ENCODE measurements at regions of chr11 and their contacts with region 1.

Region 1: DNA sequence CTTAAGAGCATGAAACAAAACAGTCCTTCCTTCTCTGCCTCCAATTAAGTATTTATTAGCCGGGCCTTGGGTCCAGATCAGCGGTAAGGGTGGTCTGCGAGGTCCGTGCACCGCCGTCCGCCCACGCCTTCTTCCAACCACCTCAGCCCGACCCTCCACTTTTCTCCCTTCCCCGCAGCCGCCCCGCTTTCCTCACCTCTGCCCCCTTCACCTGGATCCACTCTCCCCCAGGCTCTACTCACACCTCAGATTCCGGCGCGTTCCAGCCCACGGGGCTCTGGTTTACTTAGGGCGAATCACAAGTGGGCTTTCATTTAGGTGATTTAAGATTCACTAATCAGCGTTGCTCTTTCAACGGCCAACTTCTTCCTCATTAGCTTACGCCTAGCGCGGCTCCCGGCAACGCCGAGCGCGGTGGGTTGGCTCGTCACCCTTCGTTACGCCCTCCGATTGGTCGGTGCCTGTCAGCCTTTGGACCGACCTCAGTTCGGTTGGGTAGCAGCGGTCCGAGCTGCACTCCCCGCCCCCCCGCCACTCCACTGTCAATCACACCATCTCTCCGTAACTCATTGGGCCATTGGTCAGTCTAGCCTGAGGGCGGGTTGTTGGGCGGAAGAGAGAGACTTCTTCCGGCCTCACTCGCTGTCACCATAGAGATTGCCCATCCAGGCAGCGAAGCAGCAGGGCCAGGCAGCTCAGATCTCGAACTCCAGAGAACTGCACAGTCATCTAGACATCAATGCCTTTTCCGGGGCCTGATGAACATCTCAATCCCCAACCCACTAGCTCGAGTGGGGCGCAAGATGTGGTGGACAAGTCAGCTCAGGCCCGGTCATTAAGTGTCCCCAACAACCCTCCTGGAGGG is at the start of gene TMEM218:
- DNase-seq: peak; percentile 98
- H3K4me3 Mint-ChIP-seq: peak within 1 kb of the TSS; percentile 84
- H3K27ac Mint-ChIP-seq: peak within 1 kb of the TSS; percentile 79
- H3K4me1 Mint-ChIP-seq: peaks cover 16% of the 10 kb centered on the region
- H3K27me3 Mint-ChIP-seq: no peaks in the 10 kb centered on the region
- total RNA-seq, gene TMEM218: 11.5 to 12.6 TPM

Region 2: DNA sequence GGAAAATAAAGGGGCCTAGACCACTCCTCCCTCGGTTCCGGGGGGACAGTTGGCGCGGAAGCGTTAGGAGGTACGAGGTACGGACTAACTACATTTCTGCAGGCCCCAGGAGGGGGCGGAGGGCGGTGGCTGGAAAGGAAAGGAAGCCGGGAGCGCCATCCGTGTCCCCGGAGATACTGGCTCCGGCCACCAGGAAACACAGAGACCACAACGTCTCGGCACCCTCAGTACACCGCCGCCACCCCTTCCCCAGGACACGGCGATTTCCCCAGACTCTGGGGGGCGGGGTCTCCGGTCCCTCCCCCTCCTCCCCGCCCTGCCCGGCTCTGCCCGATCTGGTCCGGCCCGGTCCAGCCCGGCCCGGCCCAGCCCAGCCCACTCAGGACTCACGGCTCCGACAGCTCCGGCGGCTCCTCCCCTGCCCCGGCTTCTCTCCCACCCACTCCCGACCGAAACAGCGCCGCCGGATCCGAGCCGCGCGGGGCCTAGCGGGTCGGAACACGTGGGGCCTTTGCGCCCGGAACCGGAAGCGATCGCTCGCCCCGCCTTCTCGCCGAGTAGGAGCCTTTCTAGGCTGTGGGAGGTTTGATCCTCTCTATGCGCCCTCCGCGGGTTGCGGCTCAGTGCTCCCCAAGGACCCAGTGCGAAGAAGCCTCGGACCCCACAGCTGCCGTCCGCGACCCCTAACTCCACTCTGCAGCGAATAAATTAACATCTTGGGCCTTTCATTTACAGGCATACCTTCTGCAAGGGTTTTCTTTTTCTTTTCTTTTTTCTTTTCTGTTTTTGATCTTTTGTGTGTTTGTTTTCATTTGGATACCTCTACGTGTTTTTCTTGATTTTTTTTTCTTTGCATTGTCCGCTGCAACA is 1370.2 kb before region 1 on chr11 and contains the start of gene ZNF202:
- CTCF ChIA-PET with region 1: no interaction called
- intact Hi-C with region 1: loop called (anchors 5 kb)
- DNase-seq: peak; percentile 94
- H3K4me3 Mint-ChIP-seq: peak within 1 kb of the TSS; percentile 98
- H3K27ac Mint-ChIP-seq: peak within 1 kb of the TSS; percentile 92
- H3K4me1 Mint-ChIP-seq: peaks cover 40% of the 10 kb centered on the region
- H3K27me3 Mint-ChIP-seq: no peaks in the 10 kb centered on the region
- total RNA-seq, gene ZNF202: 5.9 to 6.4 TPM

Region 3: GRCh38 chr11:124875943-124876817 is 235.4 kb before region 1 on chr11:
- CTCF ChIA-PET with region 1: no interaction called
- intact Hi-C with region 1: loop called (anchors 1 kb)
- DNase-seq: peak; percentile 86
- H3K4me3 Mint-ChIP-seq: peak overlapping the region; percentile 83
- H3K27ac Mint-ChIP-seq: peak overlapping the region; percentile 73
- H3K4me1 Mint-ChIP-seq: peaks cover 19% of the 10 kb centered on the region
- H3K27me3 Mint-ChIP-seq: peaks cover 23% of the 10 kb centered on the region

Region 4: GRCh38 chr11:125123947-125124617 is 12.5 kb after region 1 on chr11:
- CTCF ChIA-PET with region 1: interaction called, 22 read pairs
- intact Hi-C with region 1: loop called (anchors 1 kb)
- DNase-seq: peak; percentile 61
- H3K4me3 Mint-ChIP-seq: no peak overlapping the region
- H3K27ac Mint-ChIP-seq: no peak overlapping the region
- H3K4me1 Mint-ChIP-seq: no peaks in the 10 kb centered on the region
- H3K27me3 Mint-ChIP-seq: peaks cover 16% of the 10 kb centered on the region

Region 5: DNA sequence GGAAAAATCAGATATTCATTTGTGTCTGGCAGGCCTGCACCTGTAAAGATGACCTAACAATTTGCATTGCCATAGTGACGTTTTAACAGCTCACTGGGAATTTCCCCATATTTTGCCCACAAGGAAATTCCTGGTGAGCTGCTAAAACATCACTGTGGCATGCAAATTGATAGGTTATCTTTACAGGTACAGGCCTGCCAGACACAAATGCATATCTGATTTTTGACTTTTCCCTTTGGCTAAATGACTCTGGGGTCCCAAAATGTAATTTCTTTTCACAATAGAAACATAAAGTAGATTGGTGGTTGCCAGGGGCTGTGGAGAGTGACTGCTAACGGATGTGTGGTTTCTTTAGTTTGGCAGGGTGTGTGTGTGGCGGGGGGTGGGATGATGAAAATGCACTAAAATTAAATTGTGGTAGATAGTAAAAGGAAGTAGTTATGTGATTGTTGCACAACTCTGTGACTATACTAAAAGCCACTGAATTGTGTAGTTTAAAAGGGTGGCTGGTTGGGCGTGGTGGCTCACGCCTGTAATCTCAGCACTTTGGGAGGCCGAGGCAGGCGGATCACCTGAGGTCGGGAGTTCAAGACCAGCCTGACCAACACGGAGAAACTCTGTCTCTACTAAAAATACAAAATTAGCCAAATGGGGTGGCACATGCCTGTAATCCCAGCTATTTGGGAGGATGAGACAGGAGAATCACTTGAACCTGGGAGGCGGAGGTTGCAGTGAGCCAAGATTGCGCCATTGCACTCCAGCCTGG is 402.9 kb after region 1 on chr11:
- CTCF ChIA-PET with region 1: no interaction called
- intact Hi-C with region 1: loop called (anchors 1 kb)
- DNase-seq: peak; percentile 87
- H3K4me3 Mint-ChIP-seq: no peak overlapping the region
- H3K27ac Mint-ChIP-seq: peak overlapping the region; percentile 85
- H3K4me1 Mint-ChIP-seq: peaks cover 41% of the 10 kb centered on the region
- H3K27me3 Mint-ChIP-seq: no peaks in the 10 kb centered on the region

Region 6: DNA sequence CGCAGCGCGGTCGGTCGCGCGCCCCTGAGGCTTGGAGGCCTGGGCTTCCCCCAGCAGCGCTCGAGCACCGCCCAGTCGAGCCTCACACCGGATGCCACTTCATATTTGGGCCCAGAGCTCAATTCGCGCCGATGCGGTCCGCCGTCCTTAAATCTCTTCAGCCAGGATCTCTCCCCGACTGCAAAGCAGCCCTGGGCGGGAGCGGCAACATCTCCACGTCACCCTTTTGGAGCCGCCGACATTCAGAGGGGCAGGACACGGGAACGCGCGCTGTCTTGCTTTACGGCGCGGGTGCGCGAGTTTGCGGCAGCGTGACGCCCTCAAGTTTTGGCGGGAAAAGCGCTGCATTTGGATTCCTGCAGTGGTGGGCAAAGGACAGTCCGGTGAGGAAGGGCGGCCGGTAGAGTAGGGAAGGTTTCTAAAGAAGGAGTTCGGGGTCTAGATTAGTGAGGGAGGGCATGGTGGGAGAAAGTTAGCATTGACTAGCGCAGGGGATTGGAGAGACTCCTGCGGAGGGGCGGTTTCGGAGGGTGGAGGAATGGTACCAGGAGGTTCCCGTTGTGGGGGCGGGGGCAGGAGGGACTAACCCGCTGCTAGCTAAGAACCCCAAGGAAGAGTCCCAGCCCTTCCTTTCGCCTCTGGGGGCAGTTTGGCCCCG is 514.2 kb after region 1 on chr11:
- CTCF ChIA-PET with region 1: no interaction called
- intact Hi-C with region 1: loop called (anchors 1 kb)
- DNase-seq: peak; percentile 90
- H3K4me3 Mint-ChIP-seq: peak overlapping the region; percentile 89
- H3K27ac Mint-ChIP-seq: peak overlapping the region; percentile 99
- H3K4me1 Mint-ChIP-seq: peaks cover 21% of the 10 kb centered on the region
- H3K27me3 Mint-ChIP-seq: no peaks in the 10 kb centered on the region

Measured in activated naive CD4-positive, alpha-beta T cell treated with anti-CD3 and anti-CD28 coated beads for 36 hours (primary cell).